Heart left ventricle (tissue), 16 donors: ENCODE measurements at regions of chr5 and their contacts with region 1.

Region 1: DNA sequence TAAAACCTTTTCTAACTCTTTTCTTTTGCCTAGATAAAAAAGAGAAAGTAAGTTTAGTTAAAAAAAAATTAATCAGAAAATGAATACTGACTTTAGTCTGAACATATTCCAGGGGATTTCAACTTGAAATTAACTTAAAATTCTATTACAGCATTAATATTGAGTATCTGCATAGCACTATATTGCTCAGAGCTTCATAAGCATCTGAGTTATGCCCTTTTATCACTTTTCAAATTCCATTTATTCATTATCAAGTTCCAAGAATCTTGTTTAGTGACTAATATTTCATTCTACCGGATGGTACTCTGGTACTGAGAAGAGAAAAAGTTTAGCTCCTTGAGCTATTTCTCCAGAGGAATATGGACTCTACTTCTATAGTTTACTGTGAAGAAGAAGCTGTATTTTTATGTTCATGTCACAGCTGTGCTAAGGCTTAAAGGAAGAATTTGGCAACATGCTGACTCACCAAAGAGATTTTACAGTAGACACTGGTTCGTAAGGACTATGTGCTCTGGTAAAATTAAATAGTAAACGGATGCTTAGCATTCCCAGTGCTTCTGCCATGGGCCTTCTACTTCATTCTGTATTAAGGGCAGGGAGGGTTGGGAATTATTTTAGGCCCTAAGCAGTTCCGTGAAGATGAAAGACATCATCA is 285.2 kb upstream of the SEMA6A start:
- DNase-seq: no peak
- ATAC-seq: no peak
- H3K4me3 ChIP-seq: no peak overlapping the region
- H3K27ac ChIP-seq: no peak overlapping the region
- H3K4me1 ChIP-seq: peaks cover 0 to 9% (median 0%) of the 10 kb centered on the region in 12 donors
- H3K27me3 ChIP-seq: no peaks in the 10 kb centered on the region
- CTCF ChIP-seq: no peak
- POLR2A ChIP-seq: no peak

Region 2: GRCh38 chr5:116938488-116938887 is 78.7 kb after region 1 on chr5:
- intact Hi-C with region 1: loop called in 1 of 10 experiments (anchors 2 kb)
- DNase-seq: peak in 2 of 5 donors; percentile 23 to 24
- ATAC-seq: peak in 2 of 4 donors; percentile 32 to 62
- H3K4me3 ChIP-seq: no peak overlapping the region
- H3K27ac ChIP-seq: no peak overlapping the region
- H3K4me1 ChIP-seq: peaks cover 0 to 18% (median 4%) of the 10 kb centered on the region in 12 donors
- H3K27me3 ChIP-seq: no peaks in the 10 kb centered on the region
- CTCF ChIP-seq: no peak
- POLR2A ChIP-seq: no peak